ENCODE measurements at regions of chr6 and their contacts with region 1.

Region 1: GRCh38 chr6:78253618-78254017 is 600.8 kb downstream of the MEI4 start:
- DNase-seq: no peak
- H3K4me3 ChIP-seq: no peak overlapping the region
- H3K27ac ChIP-seq: no peak overlapping the region
- H3K4me1 ChIP-seq: no peaks in the 10 kb centered on the region
- H3K27me3 ChIP-seq: no peaks in the 10 kb centered on the region
- CTCF ChIP-seq: no peak
- POLR2A ChIP-seq: no peak

Region 2: DNA sequence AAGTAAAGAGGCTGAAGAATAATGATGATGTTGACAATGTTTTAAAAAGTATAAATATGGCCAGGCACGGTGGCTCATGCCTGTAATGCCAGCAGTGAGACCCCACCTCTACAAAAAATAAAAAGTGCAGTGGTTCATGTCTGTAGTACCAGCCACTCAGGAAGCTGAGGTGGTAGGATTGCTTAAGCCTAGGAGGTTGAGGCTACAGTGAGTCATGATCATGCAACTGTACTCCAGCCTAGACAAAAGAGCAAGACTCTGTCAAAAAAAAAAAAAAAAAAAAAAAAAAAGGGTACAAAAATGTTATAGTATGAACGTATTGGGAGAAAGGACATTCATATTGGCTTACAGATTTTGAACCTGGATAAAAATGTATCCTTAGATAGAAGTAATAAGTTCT is 70.6 kb after region 1 on chr6:
- intact Hi-C with region 1: loop called (anchors 5 kb)
- DNase-seq: no peak
- H3K4me3 ChIP-seq: no peak overlapping the region
- H3K27ac ChIP-seq: no peak overlapping the region
- H3K4me1 ChIP-seq: no peaks in the 10 kb centered on the region
- H3K27me3 ChIP-seq: no peaks in the 10 kb centered on the region
- CTCF ChIP-seq: no peak
- POLR2A ChIP-seq: no peak

Measured in vagina (tissue), 2 donors.